Cardiac septum (tissue), 1 donor: ENCODE measurements at regions of chr1 and their contacts with region 1.

Region 1: GRCh38 chr1:159780583-159781582 is at the start of gene DUSP23:
- DNase-seq: peak; percentile 99
- total RNA-seq, gene DUSP23: 12.7 TPM

Region 2: GRCh38 chr1:159214149-159214760 is 566.6 kb before region 1 on chr1:
- intact Hi-C with region 1: loop called (anchors 10 kb)
- DNase-seq: no peak

Region 3: GRCh38 chr1:159406821-159407220 is 374.1 kb before region 1 on chr1:
- intact Hi-C with region 1: loop called (anchors 1 kb)
- DNase-seq: no peak

Region 4: DNA sequence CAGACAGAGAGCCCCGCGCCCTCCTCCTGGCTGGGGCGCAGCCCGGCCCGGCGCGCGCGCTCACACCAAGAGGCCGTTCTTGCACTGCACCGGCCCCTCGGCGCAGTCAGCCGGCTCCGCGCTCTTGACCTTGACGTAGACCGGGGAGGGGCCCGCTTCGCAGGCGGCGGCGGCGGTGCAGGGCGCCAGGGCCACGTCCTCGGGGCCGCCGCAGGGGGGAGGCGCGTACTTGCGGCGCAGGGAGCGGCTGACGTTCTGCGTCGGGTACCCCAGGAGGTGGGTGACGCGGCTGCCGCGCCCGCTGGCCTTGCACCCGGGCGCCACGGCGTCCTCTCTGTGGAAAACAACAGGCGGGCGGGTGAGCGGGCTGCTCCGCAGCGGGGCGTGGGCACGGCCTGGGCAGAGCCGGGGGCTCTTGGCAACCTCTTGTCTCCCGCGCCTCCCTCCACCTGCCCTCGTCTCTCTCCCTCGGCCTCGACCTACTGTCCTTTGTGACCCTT is 73.9 kb after region 1 on chr1:
- intact Hi-C with region 1: loop called (anchors 2 kb)
- DNase-seq: peak; percentile 92

Region 5: DNA sequence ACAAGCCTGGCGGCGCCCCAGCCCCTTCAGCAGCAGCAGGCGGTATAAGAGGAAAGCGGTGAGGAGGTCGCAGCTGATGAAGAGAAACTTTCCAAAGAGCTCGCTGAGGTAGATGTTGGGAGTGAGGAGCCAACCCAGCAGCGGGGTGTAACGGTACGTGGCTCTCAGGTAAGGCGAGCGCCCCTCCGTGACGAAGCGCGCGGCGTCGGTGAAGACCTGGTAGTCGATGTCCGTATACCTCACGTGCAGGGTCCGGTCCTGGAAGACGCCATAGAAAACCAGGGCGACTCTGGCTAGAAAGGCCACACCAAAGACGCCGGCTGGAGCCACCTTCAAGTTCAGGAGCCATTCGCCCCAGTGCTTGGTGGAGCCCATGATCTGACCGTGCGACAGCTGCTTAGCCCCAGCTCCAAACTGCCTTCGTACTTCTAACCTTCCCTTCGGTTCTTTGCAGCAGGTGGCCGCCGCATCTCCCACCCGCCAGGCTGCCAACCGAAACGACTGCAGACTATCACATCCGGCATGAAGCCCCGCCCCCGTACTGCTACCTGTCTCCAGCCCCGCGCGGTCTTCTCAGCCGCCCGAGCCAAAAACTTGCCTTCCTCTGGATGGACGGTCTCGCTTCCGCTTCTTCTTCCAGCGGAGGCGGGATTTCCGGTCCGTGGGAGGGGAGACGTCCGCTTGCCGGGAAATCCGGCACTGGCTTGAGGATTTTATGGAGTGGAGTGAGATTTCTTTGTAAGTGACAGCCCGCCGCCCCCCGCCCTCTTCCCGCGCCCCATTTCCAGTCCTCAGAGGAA is 250.7 kb after region 1 on chr1 and contains the start of gene PIGM:
- intact Hi-C with region 1: loop called (anchors 5 kb)
- DNase-seq: peak; percentile 96
- total RNA-seq, gene PIGM: 2.3 TPM

Region 6: DNA sequence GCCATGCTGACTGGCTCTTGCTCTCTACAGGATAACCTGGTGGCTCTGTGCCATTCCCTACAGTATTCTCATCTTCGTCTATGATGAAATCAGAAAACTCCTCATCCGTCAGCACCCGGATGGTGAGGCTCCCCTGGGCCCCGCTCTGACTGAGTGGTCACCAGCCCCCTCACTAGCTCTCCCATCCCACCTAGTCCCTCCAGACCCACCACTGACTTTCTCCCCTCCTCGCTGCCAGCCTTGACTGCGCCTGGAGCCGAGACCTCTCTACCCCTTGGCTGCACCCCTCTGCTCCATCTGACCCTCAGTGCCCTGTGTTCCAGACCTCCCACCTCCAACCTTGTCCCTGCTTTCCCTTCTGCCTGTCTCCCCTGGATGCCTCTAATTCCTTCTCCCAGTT is 405.4 kb after region 1 on chr1:
- intact Hi-C with region 1: no loop called
- DNase-seq: no peak